MCF 10A (cell line): ENCODE measurements at regions of chr1 and their contacts with region 1.

Region 1: GRCh38 chr1:223133824-223134435 is 9.1 kb downstream of the TLR5 start:
- DNase-seq: peak; percentile 94
- H3K4me3 Mint-ChIP-seq: peak overlapping the region; percentile 63
- H3K27ac Mint-ChIP-seq: no peak overlapping the region
- H3K4me1 Mint-ChIP-seq: peaks cover 45% of the 10 kb centered on the region
- H3K27me3 Mint-ChIP-seq: peaks cover 9% of the 10 kb centered on the region
- CTCF ChIP-seq: no peak

Region 2: DNA sequence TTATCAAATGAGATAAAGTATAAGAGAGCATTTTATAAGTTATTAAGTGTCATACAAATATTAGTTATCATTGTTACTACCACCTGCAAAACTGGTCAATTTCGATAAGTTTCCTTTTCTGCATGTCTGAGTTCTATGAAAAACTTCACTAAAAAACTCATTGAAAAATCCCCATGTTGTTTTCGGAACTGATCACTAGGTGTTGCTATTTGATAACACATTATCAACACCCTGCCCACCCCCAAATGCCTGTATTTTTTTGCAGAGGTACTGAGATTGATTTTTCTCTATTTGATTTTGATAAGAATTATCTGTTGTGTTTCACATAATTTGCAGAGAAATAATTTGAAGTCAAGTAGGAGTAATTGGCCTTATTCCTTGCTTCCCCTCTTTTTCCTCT is 341.2 kb before region 1 on chr1:
- CTCF ChIA-PET with region 1: interaction called, 10 read pairs
- POLR2A ChIA-PET with region 1: no interaction called
- intact Hi-C with region 1: no loop called
- DNase-seq: peak; percentile 56
- H3K4me3 Mint-ChIP-seq: no peak overlapping the region
- H3K27ac Mint-ChIP-seq: no peak overlapping the region
- H3K4me1 Mint-ChIP-seq: peaks cover 18% of the 10 kb centered on the region
- H3K27me3 Mint-ChIP-seq: peaks cover 8% of the 10 kb centered on the region
- CTCF ChIP-seq: peak; percentile 81

Region 3: GRCh38 chr1:222974496-222974895 is 159.4 kb before region 1 on chr1:
- CTCF ChIA-PET with region 1: no interaction called
- POLR2A ChIA-PET with region 1: no interaction called
- intact Hi-C with region 1: no loop called
- DNase-seq: peak; percentile 42
- H3K4me3 Mint-ChIP-seq: no peak overlapping the region
- H3K27ac Mint-ChIP-seq: no peak overlapping the region
- H3K4me1 Mint-ChIP-seq: peaks cover 6% of the 10 kb centered on the region
- H3K27me3 Mint-ChIP-seq: no peaks in the 10 kb centered on the region
- CTCF ChIP-seq: no peak

Region 4: GRCh38 chr1:223123011-223123610 is 10.8 kb before region 1 on chr1:
- CTCF ChIA-PET with region 1: interaction called, 187 read pairs
- POLR2A ChIA-PET with region 1: interaction called, 4 read pairs
- intact Hi-C with region 1: no loop called
- DNase-seq: no peak
- H3K4me3 Mint-ChIP-seq: peak overlapping the region; percentile 3
- H3K27ac Mint-ChIP-seq: no peak overlapping the region
- H3K4me1 Mint-ChIP-seq: peaks cover 9% of the 10 kb centered on the region
- H3K27me3 Mint-ChIP-seq: no peaks in the 10 kb centered on the region
- CTCF ChIP-seq: no peak

Region 5: DNA sequence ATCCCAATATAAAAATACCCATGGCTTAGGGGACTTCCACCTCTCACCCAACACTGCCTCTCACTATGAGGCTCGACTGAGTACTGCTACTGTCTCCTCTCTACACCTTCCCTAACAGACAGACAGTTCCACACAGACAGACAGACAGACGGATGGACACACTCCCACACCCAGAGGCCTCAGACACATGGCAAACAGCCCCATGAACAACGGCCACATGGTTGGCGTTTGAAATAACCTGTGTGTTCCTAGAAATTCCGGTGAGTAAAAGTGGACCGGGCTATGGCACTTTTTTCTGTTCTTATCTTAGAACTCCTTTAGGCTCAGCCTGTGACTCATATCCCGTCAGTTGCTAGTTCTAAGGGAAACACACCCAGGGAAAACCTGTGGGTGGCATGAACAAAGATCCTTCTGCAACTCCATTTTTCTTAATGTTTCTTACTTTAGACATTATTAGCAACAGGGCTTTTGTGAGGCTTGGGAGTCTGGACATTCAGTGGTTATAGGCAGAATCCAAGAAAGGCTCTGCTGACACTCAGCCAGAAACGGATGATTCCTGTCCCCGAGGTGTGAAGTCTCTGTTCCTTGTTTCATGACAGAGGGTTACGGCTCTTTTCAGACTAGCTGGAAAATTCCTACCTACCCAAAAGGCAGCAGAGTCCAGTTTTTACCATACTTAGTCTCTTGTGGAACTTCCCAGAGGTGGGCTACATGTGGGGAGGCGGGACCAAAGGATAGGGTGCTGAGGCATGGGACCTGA is 99.7 kb after region 1 on chr1:
- CTCF ChIA-PET with region 1: interaction called, 9 read pairs
- POLR2A ChIA-PET with region 1: no interaction called
- intact Hi-C with region 1: loop called (anchors 1 kb)
- DNase-seq: peak; percentile 95
- H3K4me3 Mint-ChIP-seq: peak overlapping the region; percentile 26
- H3K27ac Mint-ChIP-seq: peak overlapping the region; percentile 33
- H3K4me1 Mint-ChIP-seq: peaks cover 48% of the 10 kb centered on the region
- H3K27me3 Mint-ChIP-seq: no peaks in the 10 kb centered on the region
- CTCF ChIP-seq: no peak

Region 6: DNA sequence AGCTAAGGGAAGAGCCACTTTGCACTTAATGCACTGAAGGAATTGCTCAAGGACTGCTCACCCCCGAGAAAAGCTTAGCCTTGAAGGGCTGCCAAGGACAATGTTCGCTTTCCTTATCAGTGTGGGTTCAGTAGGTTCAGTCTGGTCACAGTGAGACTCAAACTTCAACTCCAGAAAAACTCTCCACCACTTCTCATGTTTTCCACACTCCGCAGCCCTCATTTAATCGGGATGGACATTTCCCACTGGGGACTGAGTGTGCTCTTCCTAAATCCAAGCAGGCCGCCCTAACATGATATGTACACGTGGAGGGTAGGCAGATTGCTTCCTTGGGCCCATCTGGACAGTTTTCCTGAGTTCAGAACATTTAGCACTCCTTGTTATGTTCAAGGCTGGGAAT is 210.6 kb after region 1 on chr1:
- CTCF ChIA-PET with region 1: interaction called, 10 read pairs
- POLR2A ChIA-PET with region 1: interaction called, 4 read pairs
- intact Hi-C with region 1: no loop called
- DNase-seq: no peak
- H3K4me3 Mint-ChIP-seq: no peak overlapping the region
- H3K27ac Mint-ChIP-seq: no peak overlapping the region
- H3K4me1 Mint-ChIP-seq: peaks cover 6% of the 10 kb centered on the region
- H3K27me3 Mint-ChIP-seq: no peaks in the 10 kb centered on the region
- CTCF ChIP-seq: no peak

Region 7: GRCh38 chr1:223429313-223429731 is 295.4 kb after region 1 on chr1:
- CTCF ChIA-PET with region 1: interaction called, 127 read pairs
- POLR2A ChIA-PET with region 1: interaction called, 22 read pairs
- intact Hi-C with region 1: loop called (anchors 1 kb)
- DNase-seq: peak; percentile 95
- H3K4me3 Mint-ChIP-seq: no peak overlapping the region
- H3K27ac Mint-ChIP-seq: no peak overlapping the region
- H3K4me1 Mint-ChIP-seq: peaks cover 14% of the 10 kb centered on the region
- H3K27me3 Mint-ChIP-seq: no peaks in the 10 kb centered on the region
- CTCF ChIP-seq: no peak

Region 8: GRCh38 chr1:223628233-223629125 is 494.5 kb after region 1 on chr1:
- CTCF ChIA-PET with region 1: interaction called, 12 read pairs
- POLR2A ChIA-PET with region 1: interaction called, 7 read pairs
- intact Hi-C with region 1: no loop called
- DNase-seq: peak; percentile 72
- H3K4me3 Mint-ChIP-seq: no peak overlapping the region
- H3K27ac Mint-ChIP-seq: no peak overlapping the region
- H3K4me1 Mint-ChIP-seq: no peaks in the 10 kb centered on the region
- H3K27me3 Mint-ChIP-seq: no peaks in the 10 kb centered on the region
- CTCF ChIP-seq: peak; percentile 85